ENCODE measurements at regions of chr3 and their contacts with region 1.

Region 1: DNA sequence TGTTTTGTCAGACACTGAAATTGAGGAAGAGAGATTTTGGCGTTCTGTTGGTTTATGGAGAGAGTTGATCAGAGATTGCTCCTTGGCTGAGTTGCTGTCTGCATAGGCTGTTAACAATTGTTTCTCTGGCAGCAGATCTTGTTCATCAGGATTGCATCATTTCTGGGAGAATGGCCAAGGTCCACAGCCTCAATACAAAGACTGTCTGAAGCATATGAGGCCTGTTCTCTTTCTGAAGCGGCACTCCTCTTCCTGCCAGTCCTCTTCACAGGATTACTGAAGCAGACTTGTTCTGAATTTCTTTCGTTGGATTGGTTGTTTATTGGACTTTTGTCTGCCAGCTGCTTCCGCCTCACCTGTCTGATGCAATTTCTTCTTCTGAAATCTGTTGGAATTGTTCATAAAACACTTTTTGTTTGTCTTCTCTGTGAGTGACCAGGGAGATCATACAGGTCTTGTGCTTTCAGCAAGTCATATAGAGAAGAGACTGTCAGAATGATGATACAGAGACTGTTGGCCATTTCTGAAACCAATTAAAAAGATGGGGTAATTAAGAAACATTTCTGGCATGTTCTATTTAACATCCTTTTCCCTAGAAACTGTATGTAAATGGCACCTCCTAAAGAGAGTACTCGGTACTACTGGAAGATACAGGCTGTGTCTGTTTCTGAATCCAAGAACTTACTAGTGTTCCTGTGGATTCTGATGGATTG is 25.5 kb downstream of the SETD5 start:
- DNase-seq: peak; percentile 79
- H3K4me3 Mint-ChIP-seq: peak overlapping the region; percentile 61
- H3K27ac Mint-ChIP-seq: peak overlapping the region; percentile 100
- H3K4me1 Mint-ChIP-seq: peaks cover 38% of the 10 kb centered on the region
- H3K27me3 Mint-ChIP-seq: no peaks in the 10 kb centered on the region
- CTCF ChIP-seq: no peak

Region 2: GRCh38 chr3:9316881-9317361 is 105.9 kb before region 1 on chr3:
- CTCF ChIA-PET with region 1: no interaction called
- intact Hi-C with region 1: no loop called
- DNase-seq: peak; percentile 26
- H3K4me3 Mint-ChIP-seq: peak overlapping the region; percentile 59
- H3K27ac Mint-ChIP-seq: peak overlapping the region; percentile 56
- H3K4me1 Mint-ChIP-seq: peaks cover 26% of the 10 kb centered on the region
- H3K27me3 Mint-ChIP-seq: no peaks in the 10 kb centered on the region
- CTCF ChIP-seq: no peak

Region 3: GRCh38 chr3:9352917-9353752 is 69.7 kb before region 1 on chr3:
- CTCF ChIA-PET with region 1: interaction called, 9 read pairs
- intact Hi-C with region 1: loop called (anchors 2 kb)
- DNase-seq: peak; percentile 77
- H3K4me3 Mint-ChIP-seq: peak overlapping the region; percentile 33
- H3K27ac Mint-ChIP-seq: peak overlapping the region; percentile 83
- H3K4me1 Mint-ChIP-seq: peaks cover 75% of the 10 kb centered on the region
- H3K27me3 Mint-ChIP-seq: no peaks in the 10 kb centered on the region
- CTCF ChIP-seq: peak; percentile 82

Region 4: DNA sequence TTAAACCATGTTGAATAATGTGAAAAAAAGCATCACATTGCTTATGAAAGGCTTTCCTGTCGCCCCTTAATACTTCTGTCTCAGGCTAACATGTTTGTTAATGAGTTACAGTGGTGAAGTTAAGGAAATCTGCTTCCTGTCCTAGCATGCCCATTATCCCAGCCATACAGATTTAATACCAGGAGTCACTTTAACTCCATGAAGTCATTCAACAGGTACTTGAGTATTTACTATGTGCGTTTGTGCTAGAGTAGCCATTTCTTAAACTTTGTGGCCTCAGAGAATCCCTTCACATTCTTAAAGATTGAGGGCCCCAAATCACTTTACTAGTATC is 35.6 kb before region 1 on chr3:
- CTCF ChIA-PET with region 1: no interaction called
- intact Hi-C with region 1: loop called (anchors 5 kb)
- DNase-seq: no peak
- H3K4me3 Mint-ChIP-seq: no peak overlapping the region
- H3K27ac Mint-ChIP-seq: no peak overlapping the region
- H3K4me1 Mint-ChIP-seq: peaks cover 11% of the 10 kb centered on the region
- H3K27me3 Mint-ChIP-seq: no peaks in the 10 kb centered on the region
- CTCF ChIP-seq: no peak

Region 5: GRCh38 chr3:9397906-9398699 is 24.8 kb before region 1 on chr3:
- CTCF ChIA-PET with region 1: interaction called, 7 read pairs
- intact Hi-C with region 1: loop called (anchors 1 kb)
- DNase-seq: peak; percentile 14
- H3K4me3 Mint-ChIP-seq: peak overlapping the region; percentile 93
- H3K27ac Mint-ChIP-seq: peak overlapping the region; percentile 92
- H3K4me1 Mint-ChIP-seq: peaks cover 31% of the 10 kb centered on the region
- H3K27me3 Mint-ChIP-seq: no peaks in the 10 kb centered on the region
- CTCF ChIP-seq: no peak